PC-9 (cell line): ENCODE measurements at regions of chr11 and their contacts with region 1.

Region 1: DNA sequence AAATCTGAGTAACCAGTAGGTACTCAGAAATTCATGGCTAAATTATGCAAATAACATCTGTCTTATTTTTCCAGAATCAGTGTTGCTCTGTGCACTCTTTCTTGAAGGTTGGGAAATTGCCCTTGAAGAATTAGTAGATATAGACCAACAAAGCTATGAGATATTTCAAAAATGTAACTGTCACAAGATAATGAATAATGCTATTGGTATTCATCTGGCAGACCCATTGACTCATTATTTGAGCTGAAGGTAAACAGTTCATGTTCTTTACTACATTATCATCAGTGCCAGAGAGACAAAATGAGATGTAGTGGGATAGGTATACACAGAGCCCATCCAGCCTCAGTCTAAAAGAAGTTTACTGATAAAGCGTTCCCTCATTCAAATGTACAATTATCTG is 274.7 kb downstream of the CASP12 start:
- DNase-seq: peak in 1 of 2 experiments; percentile 77
- H3K4me3 ChIP-seq: no peak overlapping the region
- H3K27ac ChIP-seq: no peak overlapping the region
- H3K4me1 ChIP-seq: peaks cover 6% of the 10 kb centered on the region
- H3K27me3 ChIP-seq: no peaks in the 10 kb centered on the region
- CTCF ChIP-seq: no peak

Region 2: DNA sequence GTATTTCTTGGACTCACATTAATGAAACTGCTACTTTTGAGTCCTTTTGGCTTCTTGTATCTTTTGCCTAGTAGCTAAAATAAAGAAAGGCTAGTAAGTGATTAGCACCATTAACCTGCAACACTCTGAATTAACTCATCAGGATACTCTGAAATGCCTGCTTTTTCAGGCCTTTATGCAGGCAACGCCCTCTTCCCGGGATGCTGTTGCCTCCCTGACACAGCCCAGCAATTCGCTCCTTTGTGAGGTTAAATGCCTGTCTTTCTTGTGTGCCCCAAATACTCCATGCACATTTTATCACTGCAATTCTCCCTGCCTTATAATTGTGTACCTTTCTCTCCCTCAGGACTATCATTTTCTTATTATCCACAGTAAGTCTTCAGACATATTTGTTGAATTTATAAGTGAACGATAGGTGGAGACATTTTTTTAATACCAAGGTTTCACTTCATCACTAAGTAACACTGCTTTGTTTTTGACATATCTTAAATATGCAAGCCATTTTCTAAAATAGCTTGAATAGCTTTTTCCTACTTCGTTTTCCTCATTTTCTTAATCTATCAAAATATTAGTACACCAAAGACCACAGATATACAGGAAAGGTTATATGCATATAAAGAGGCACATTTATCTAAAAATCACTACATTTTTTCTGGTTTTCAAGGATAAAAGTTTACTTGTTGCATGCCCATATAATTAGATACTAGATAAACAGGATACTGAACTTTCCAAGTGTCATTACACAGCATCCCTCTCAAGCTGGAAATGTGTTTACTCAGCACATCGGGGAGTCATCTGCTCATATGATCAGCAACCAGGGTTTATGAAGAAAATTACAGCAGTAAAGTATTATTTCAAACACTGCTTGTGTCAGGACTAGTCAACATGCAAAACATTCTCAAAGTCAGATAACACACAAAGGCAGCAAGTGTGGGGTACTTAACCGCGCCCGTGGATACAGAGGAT is 635.6 kb before region 1 on chr11:
- CTCF ChIA-PET with region 1: no interaction called
- POLR2A ChIA-PET with region 1: interaction called, 15 read pairs
- intact Hi-C with region 1: no loop called
- DNase-seq: no peak
- H3K4me3 ChIP-seq: no peak overlapping the region
- H3K27ac ChIP-seq: no peak overlapping the region
- H3K4me1 ChIP-seq: 0 out of 2 replicates have a peak, but pooled peaks cover 5% of the 10 kb centered on the region
- H3K27me3 ChIP-seq: no peaks in the 10 kb centered on the region
- CTCF ChIP-seq: no peak

Region 3: DNA sequence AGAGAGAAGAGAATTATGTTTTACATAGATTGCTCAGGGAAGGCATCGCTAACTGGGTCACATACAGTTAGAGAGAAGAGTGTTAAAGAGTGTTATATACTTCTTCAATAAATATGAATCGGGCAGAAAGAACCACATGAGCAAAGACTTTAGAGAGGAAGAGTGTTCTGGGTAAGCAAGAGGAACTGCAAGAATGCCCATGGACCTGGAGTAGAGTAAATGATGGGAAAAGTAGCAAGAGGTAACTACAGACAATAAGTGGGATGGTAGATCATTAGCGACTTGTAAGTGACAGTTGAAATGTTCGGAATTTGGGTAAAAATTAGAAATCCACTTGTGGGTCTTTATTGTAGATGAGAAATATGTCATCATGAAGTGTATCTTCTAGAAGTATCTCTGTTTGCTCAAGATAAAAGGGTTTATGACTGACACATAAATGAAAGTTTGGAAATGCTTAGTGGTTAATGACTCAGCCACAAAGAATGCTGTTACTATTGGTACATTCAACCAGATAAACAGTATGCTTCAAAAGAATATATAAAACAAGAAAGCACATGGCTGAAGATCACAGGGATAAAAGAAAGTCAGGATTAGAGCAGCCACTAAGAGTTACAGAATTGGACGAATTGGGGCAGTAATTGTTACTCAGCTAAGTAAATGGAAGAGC is 45.4 kb after region 1 on chr11:
- CTCF ChIA-PET with region 1: no interaction called
- POLR2A ChIA-PET with region 1: no interaction called
- intact Hi-C with region 1: loop called (anchors 1 kb)
- DNase-seq: peak; percentile 1 to 91
- H3K4me3 ChIP-seq: no peak overlapping the region
- H3K27ac ChIP-seq: no peak overlapping the region
- H3K4me1 ChIP-seq: peaks cover 15% of the 10 kb centered on the region
- H3K27me3 ChIP-seq: no peaks in the 10 kb centered on the region
- CTCF ChIP-seq: no peak